OCI-LY7 (cell line): ENCODE measurements at regions of chr4 and their contacts with region 1.

Region 1: GRCh38 chr4:52665592-52665991 is 6.5 kb upstream of the USP46 start:
- DNase-seq: peak; percentile 62
- H3K4me3 ChIP-seq: no peak overlapping the region
- H3K27ac ChIP-seq: no peak overlapping the region
- H3K4me1 ChIP-seq: no peaks in the 10 kb centered on the region
- CTCF ChIP-seq: peak; percentile 76

Region 2: DNA sequence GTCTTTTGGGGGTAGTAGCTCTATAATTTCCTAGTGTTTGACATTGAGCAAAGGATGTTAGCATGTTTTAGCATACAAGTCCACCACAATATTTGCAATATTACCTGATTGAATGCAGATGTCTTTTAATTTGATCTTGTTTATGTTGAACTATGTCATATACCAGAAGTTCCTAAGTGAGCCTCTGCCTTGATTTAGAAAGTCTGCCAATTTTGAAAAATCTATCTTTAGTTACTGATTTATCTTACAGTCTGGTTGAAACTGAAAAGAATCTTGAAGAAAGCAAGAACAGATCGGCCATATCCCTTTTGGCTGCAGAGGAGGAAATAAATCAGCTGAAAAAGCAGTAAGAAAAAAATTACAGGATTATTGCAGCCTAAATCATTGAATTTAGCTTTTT is 596.0 kb before region 1 on chr4:
- CTCF ChIA-PET with region 1: no interaction called
- POLR2A ChIA-PET with region 1: no interaction called
- intact Hi-C with region 1: no loop called
- DNase-seq: no peak
- H3K4me3 ChIP-seq: no peak overlapping the region
- H3K27ac ChIP-seq: no peak overlapping the region
- H3K4me1 ChIP-seq: no peaks in the 10 kb centered on the region
- CTCF ChIP-seq: no peak

Region 3: GRCh38 chr4:52376132-52376704 is 289.4 kb before region 1 on chr4:
- CTCF ChIA-PET with region 1: no interaction called
- POLR2A ChIA-PET with region 1: no interaction called
- intact Hi-C with region 1: loop called (anchors 5 kb)
- DNase-seq: peak; percentile 48
- H3K4me3 ChIP-seq: no peak overlapping the region
- H3K27ac ChIP-seq: no peak overlapping the region
- H3K4me1 ChIP-seq: no peaks in the 10 kb centered on the region
- CTCF ChIP-seq: peak; percentile 93

Region 4: GRCh38 chr4:52545099-52546069 is 120.2 kb before region 1 on chr4:
- CTCF ChIA-PET with region 1: no interaction called
- POLR2A ChIA-PET with region 1: no interaction called
- intact Hi-C with region 1: loop called (anchors 2 kb)
- DNase-seq: peak; percentile 41
- H3K4me3 ChIP-seq: no peak overlapping the region
- H3K27ac ChIP-seq: no peak overlapping the region
- H3K4me1 ChIP-seq: no peaks in the 10 kb centered on the region
- CTCF ChIP-seq: peak; percentile 94

Region 5: DNA sequence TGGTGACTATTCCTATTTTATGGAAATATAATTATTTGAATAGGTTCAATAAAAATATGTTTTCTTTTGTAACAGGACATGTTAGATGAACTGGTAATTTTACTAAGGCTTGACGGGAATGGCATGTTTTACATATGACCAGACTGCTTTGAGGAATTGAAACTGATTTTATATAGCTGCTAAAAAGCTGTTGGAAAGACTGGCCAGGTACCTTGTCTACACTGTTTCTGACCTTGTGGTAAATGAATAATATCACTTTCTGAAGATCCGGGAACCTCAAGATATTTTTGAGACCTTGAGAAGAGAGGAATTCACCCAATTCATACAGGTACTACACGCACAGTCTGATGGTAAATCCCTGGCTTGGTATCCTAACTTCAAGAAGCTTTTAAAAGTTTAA is 35.6 kb after region 1 on chr4:
- CTCF ChIA-PET with region 1: no interaction called
- POLR2A ChIA-PET with region 1: no interaction called
- intact Hi-C with region 1: loop called (anchors 1 kb)
- DNase-seq: peak; percentile 65
- H3K4me3 ChIP-seq: peak overlapping the region; percentile 12
- H3K27ac ChIP-seq: peak overlapping the region; percentile 46
- H3K4me1 ChIP-seq: peaks cover 29% of the 10 kb centered on the region
- CTCF ChIP-seq: no peak

Region 6: GRCh38 chr4:52911684-52912294 is 246.2 kb after region 1 on chr4:
- CTCF ChIA-PET with region 1: no interaction called
- POLR2A ChIA-PET with region 1: no interaction called
- intact Hi-C with region 1: no loop called
- DNase-seq: peak; percentile 80
- H3K4me3 ChIP-seq: no peak overlapping the region
- H3K27ac ChIP-seq: no peak overlapping the region
- H3K4me1 ChIP-seq: no peaks in the 10 kb centered on the region
- CTCF ChIP-seq: peak; percentile 97